ENCODE measurements at regions of chr19 and their contacts with region 1.

Region 1: GRCh38 chr19:45061965-45062364 is 14.3 kb downstream of the ZNF296 start:
- DNase-seq: no peak
- ATAC-seq: no peak
- H3K4me3 ChIP-seq: no peak overlapping the region
- H3K4me3 Mint-ChIP-seq: no peak overlapping the region
- H3K27ac ChIP-seq: no peak overlapping the region
- H3K27ac Mint-ChIP-seq: no peak overlapping the region
- H3K4me1 ChIP-seq: peaks cover 0 to 7% of the 10 kb centered on the region in 2 experiments
- H3K4me1 Mint-ChIP-seq: peaks cover 4 to 11% (median 5%) of the 10 kb centered on the region in 3 donors
- H3K27me3 ChIP-seq: no peaks in the 10 kb centered on the region
- H3K27me3 Mint-ChIP-seq: no peaks in the 10 kb centered on the region

Region 2: DNA sequence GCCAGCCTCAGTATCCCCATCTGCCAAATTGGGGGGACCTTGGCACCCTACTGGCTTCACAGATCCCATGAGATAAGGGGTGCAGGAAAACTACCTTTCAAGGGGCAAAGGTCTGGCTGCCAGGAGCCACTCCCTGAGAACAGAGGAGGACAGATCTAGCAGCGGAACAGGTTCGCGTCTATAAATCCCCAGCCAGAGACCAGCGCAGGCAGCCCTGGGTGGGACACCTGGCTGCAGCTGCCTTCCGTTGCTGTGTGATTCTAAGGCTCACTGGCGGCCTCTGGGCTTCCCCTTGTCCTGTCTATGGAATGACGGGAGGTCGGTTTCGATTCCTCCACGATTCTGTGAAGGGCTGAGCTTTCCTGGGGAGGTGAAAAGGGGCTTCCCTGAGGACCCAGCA is 53.4 kb before region 1 on chr19:
- CTCF ChIA-PET with region 1: no interaction called
- POLR2A ChIA-PET with region 1: interaction called in 1 of 2 experiments, 11 read pairs
- DNase-seq: no peak
- ATAC-seq: no peak
- H3K4me3 ChIP-seq: no peak overlapping the region
- H3K4me3 Mint-ChIP-seq: no peak overlapping the region
- H3K27ac ChIP-seq: no peak overlapping the region
- H3K27ac Mint-ChIP-seq: no peak overlapping the region
- H3K4me1 ChIP-seq: no peaks in the 10 kb centered on the region
- H3K4me1 Mint-ChIP-seq: peaks cover 0 to 6% (median 2%) of the 10 kb centered on the region in 3 donors
- H3K27me3 ChIP-seq: no peaks in the 10 kb centered on the region
- H3K27me3 Mint-ChIP-seq: no peaks in the 10 kb centered on the region

Measured in T-cell (primary cell).